Caco-2 (cell line): ENCODE measurements at regions of chr5 and their contacts with region 1.

Region 1: GRCh38 chr5:17400724-17401464 is 97.1 kb upstream of the TAF11L2 start:
- DNase-seq: peak in 1 of 2 experiments; percentile 47
- H3K4me3 ChIP-seq: no peak overlapping the region
- H3K4me3 Mint-ChIP-seq: peak overlapping the region; percentile 72
- H3K27ac Mint-ChIP-seq: peak overlapping the region; percentile 87
- H3K4me1 ChIP-seq: peaks cover 45% of the 10 kb centered on the region
- H3K4me1 Mint-ChIP-seq: peaks cover 56% of the 10 kb centered on the region
- H3K27me3 ChIP-seq: no peaks in the 10 kb centered on the region
- H3K27me3 Mint-ChIP-seq: no peaks in the 10 kb centered on the region
- CTCF ChIP-seq: no peak

Region 2: GRCh38 chr5:16502866-16503265 is 898.0 kb before region 1 on chr5:
- CTCF ChIA-PET with region 1: no interaction called
- POLR2A ChIA-PET with region 1: no interaction called
- intact Hi-C with region 1: no loop called
- DNase-seq: no peak
- H3K4me3 ChIP-seq: no peak overlapping the region
- H3K4me3 Mint-ChIP-seq: no peak overlapping the region
- H3K27ac Mint-ChIP-seq: no peak overlapping the region
- H3K4me1 ChIP-seq: peaks cover 8% of the 10 kb centered on the region; the same call in 1 of the 2 replicates
- H3K4me1 Mint-ChIP-seq: peaks cover 11% of the 10 kb centered on the region
- H3K27me3 ChIP-seq: no peaks in the 10 kb centered on the region
- H3K27me3 Mint-ChIP-seq: no peaks in the 10 kb centered on the region
- CTCF ChIP-seq: no peak

Region 3: DNA sequence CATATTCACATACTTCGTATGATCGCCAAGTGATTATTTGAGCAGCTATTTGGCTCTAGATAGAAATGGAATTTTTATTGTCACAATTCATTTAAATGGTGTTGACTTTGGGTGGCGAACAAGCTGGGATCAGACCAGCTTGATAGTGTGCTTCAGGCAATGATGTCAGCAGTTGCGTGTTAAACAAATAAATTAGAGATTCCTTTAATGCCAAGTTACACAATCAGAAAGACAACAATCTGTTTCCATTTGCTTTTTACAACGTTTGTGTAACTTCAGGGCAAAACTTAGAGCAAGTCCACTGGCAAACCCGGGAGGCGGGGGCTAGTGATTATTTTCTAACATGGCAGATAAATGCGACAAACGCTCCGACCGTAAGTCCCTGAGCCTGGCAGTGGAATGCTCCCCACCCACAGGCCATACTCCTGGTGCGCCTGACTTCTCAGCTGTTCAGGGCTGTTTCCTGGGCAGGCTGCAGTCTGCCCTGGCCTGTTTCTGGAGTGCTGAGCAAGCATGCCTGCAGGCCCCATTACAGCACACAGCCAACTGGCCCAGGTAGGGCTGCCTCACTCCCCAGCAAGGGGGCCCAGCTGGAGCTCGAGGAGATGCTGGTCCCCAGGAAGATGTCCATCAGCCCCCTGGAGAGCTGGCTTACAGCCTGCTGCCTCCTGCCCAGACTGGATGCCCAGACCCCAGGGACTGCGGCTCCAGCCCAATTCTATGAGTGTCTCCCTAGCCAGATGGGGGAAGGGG is 94.8 kb before region 1 on chr5:
- CTCF ChIA-PET with region 1: interaction called, 8 read pairs
- POLR2A ChIA-PET with region 1: interaction called, 8 read pairs
- intact Hi-C with region 1: loop called (anchors 1 kb)
- DNase-seq: peak; percentile 90 to 91
- H3K4me3 ChIP-seq: peak overlapping the region; percentile 2; the same call in 1 of the 2 replicates
- H3K4me3 Mint-ChIP-seq: peak overlapping the region; percentile 61
- H3K27ac Mint-ChIP-seq: peak overlapping the region; percentile 93
- H3K4me1 ChIP-seq: peaks cover 32% of the 10 kb centered on the region
- H3K4me1 Mint-ChIP-seq: peaks cover 35% of the 10 kb centered on the region
- H3K27me3 ChIP-seq: no peaks in the 10 kb centered on the region
- H3K27me3 Mint-ChIP-seq: no peaks in the 10 kb centered on the region
- CTCF ChIP-seq: no peak

Region 4: DNA sequence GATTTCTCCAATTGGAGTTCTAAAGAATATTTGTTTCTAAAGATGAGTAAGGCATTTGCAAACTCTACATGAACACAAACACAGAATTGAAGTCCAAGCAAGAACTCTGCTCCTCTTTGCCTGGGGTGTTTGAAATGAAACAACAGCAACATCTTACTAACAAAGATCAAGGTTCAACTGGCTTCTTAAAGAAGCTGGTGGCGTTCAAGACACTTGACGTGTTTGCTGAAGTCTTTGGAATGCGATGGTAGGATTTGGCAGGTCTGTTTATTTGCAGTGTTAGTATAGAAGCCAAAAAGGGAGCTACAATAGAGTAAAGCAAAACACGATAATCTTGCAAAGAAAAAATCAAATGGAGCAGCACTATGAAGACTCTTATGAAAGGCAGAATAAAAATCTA is 88.5 kb before region 1 on chr5:
- CTCF ChIA-PET with region 1: interaction called, 4 read pairs
- POLR2A ChIA-PET with region 1: no interaction called
- intact Hi-C with region 1: loop called (anchors 1 kb)
- DNase-seq: peak in 1 of 2 experiments; percentile 34
- H3K4me3 ChIP-seq: no peak overlapping the region
- H3K4me3 Mint-ChIP-seq: peak overlapping the region; percentile 51
- H3K27ac Mint-ChIP-seq: peak overlapping the region; percentile 81
- H3K4me1 ChIP-seq: peaks cover 43% of the 10 kb centered on the region
- H3K4me1 Mint-ChIP-seq: peaks cover 43% of the 10 kb centered on the region
- H3K27me3 ChIP-seq: no peaks in the 10 kb centered on the region
- H3K27me3 Mint-ChIP-seq: no peaks in the 10 kb centered on the region
- CTCF ChIP-seq: no peak

Region 5: GRCh38 chr5:17326600-17327037 is 74.3 kb before region 1 on chr5:
- CTCF ChIA-PET with region 1: no interaction called
- POLR2A ChIA-PET with region 1: no interaction called
- intact Hi-C with region 1: loop called (anchors 1 kb)
- DNase-seq: peak; percentile 60 to 64
- H3K4me3 ChIP-seq: no peak overlapping the region
- H3K4me3 Mint-ChIP-seq: no peak overlapping the region
- H3K27ac Mint-ChIP-seq: no peak overlapping the region
- H3K4me1 ChIP-seq: peaks cover 38% of the 10 kb centered on the region
- H3K4me1 Mint-ChIP-seq: peaks cover 31% of the 10 kb centered on the region
- H3K27me3 ChIP-seq: no peaks in the 10 kb centered on the region
- H3K27me3 Mint-ChIP-seq: no peaks in the 10 kb centered on the region
- CTCF ChIP-seq: no peak

Region 6: GRCh38 chr5:17359451-17360011 is 41.4 kb before region 1 on chr5:
- CTCF ChIA-PET with region 1: interaction called, 3 read pairs
- POLR2A ChIA-PET with region 1: no interaction called
- intact Hi-C with region 1: loop called (anchors 5 kb)
- DNase-seq: no peak
- H3K4me3 ChIP-seq: no peak overlapping the region
- H3K4me3 Mint-ChIP-seq: no peak overlapping the region
- H3K27ac Mint-ChIP-seq: no peak overlapping the region
- H3K4me1 ChIP-seq: peaks cover 15% of the 10 kb centered on the region
- H3K4me1 Mint-ChIP-seq: peaks cover 23% of the 10 kb centered on the region
- H3K27me3 ChIP-seq: no peaks in the 10 kb centered on the region
- H3K27me3 Mint-ChIP-seq: no peaks in the 10 kb centered on the region
- CTCF ChIP-seq: no peak

Region 7: GRCh38 chr5:17378346-17378997 is 22.4 kb before region 1 on chr5:
- CTCF ChIA-PET with region 1: no interaction called
- POLR2A ChIA-PET with region 1: no interaction called
- intact Hi-C with region 1: loop called (anchors 1 kb)
- DNase-seq: peak in 1 of 2 experiments; percentile 18
- H3K4me3 ChIP-seq: no peak overlapping the region
- H3K4me3 Mint-ChIP-seq: no peak overlapping the region
- H3K27ac Mint-ChIP-seq: no peak overlapping the region
- H3K4me1 ChIP-seq: peaks cover 24% of the 10 kb centered on the region
- H3K4me1 Mint-ChIP-seq: peaks cover 23% of the 10 kb centered on the region
- H3K27me3 ChIP-seq: no peaks in the 10 kb centered on the region
- H3K27me3 Mint-ChIP-seq: no peaks in the 10 kb centered on the region
- CTCF ChIP-seq: no peak